AG04450 (cell line): ENCODE measurements at regions of chr2 and their contacts with region 1.

Region 1: GRCh38 chr2:54899576-54900200 is 150.6 kb downstream of the RTN4 start:
- DNase-seq: peak; percentile 18
- H3K4me3 ChIP-seq: no peak overlapping the region
- H3K27ac ChIP-seq: no peak overlapping the region
- H3K27me3 ChIP-seq: no peaks in the 10 kb centered on the region
- CTCF ChIP-seq: peak; percentile 73

Region 2: GRCh38 chr2:54972499-54972898 is 72.8 kb after region 1 on chr2:
- CTCF ChIA-PET with region 1: interaction called, 10 read pairs
- POLR2A ChIA-PET with region 1: no interaction called
- DNase-seq: no peak
- H3K4me3 ChIP-seq: no peak overlapping the region
- H3K27ac ChIP-seq: no peak overlapping the region
- H3K27me3 ChIP-seq: no peaks in the 10 kb centered on the region
- CTCF ChIP-seq: no peak